HepG2 (cell line): ENCODE measurements at regions of chr17 and their contacts with region 1.

Region 1: GRCh38 chr17:55433629-55434305 is 12.1 kb upstream of the MMD start:
- DNase-seq: peak; percentile 99
- ATAC-seq: peak; percentile 89
- H3K4me3 ChIP-seq: peak overlapping the region in 2 of 3 experiments; percentile 6 to 44; a peak in 2 of 6 replicates
- H3K27ac ChIP-seq: peak overlapping the region; percentile 92
- H3K4me1 ChIP-seq: peaks cover 80% of the 10 kb centered on the region
- H3K27me3 ChIP-seq: no peaks in the 10 kb centered on the region
- CTCF ChIP-seq: no peak
- EP300 ChIP-seq: peak; percentile 86 to 95; a peak in 3 of 4 replicates
- POLR2A ChIP-seq: peak; percentile 64 to 93
- RAD21 ChIP-seq: no peak

Region 2: GRCh38 chr17:55444471-55445441 is 11.0 kb after region 1 on chr17:
- CTCF ChIA-PET with region 1: no interaction called
- POLR2A ChIA-PET with region 1: interaction called, 136 read pairs
- in situ Hi-C with region 1: no loop called
- intact Hi-C with region 1: loop called (anchors 1 kb)
- DNase-seq: peak; percentile 91
- ATAC-seq: peak; percentile 63
- H3K4me3 ChIP-seq: peak overlapping the region in 1 of 3 experiments; percentile 24; a peak in 1 of 6 replicates
- H3K27ac ChIP-seq: peak overlapping the region; percentile 88
- H3K4me1 ChIP-seq: peaks cover 94% of the 10 kb centered on the region
- H3K27me3 ChIP-seq: no peaks in the 10 kb centered on the region
- CTCF ChIP-seq: 0 out of 2 replicates have a peak, but pooled peaks have one; percentile 5
- EP300 ChIP-seq: peak in 1 of 2 experiments; percentile 64; a peak in 2 of 4 replicates
- POLR2A ChIP-seq: peak in 1 of 2 experiments; percentile 30; a peak in 3 of 4 replicates
- RAD21 ChIP-seq: no peak

Region 3: DNA sequence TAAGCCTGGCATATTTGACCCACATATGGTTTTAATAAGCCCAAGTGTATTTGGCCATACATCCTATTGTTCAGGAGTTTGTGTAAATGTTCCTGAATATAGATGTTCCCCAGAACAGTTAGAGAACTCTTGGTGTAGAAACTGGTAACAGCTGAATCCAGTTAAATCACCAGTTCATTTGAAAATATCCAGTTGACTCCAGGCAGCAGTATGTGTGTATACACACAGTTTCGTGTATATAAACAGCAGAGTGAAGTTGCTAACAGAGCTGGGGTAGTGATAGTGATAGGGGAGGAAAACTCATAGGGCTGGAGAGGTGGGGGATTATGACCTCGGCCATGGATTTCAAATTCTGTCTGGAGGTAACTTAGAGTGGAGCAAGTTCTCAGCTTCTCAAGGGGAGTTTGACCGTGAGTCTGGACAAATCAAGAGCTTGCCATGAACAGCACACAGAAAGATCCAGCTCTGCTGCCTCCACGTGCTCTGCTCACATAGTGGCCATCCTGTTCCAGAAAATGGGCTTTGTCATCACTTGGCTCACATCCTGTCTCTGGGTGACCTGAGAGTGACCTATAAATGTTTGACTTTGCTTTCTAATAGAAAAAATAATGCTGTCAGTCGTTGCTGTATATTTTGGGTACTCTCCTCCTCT is 18.5 kb after region 1 on chr17:
- CTCF ChIA-PET with region 1: no interaction called
- POLR2A ChIA-PET with region 1: interaction called, 136 read pairs
- in situ Hi-C with region 1: no loop called
- intact Hi-C with region 1: no loop called
- DNase-seq: peak; percentile 85
- ATAC-seq: peak; percentile 64
- H3K4me3 ChIP-seq: no peak overlapping the region
- H3K27ac ChIP-seq: peak overlapping the region; percentile 58
- H3K4me1 ChIP-seq: peaks cover 94% of the 10 kb centered on the region
- H3K27me3 ChIP-seq: no peaks in the 10 kb centered on the region
- CTCF ChIP-seq: no peak
- EP300 ChIP-seq: peak in 1 of 2 experiments; percentile 63; a peak in 1 of 4 replicates
- POLR2A ChIP-seq: no peak
- RAD21 ChIP-seq: no peak